ENCODE measurements at regions of chr5 and their contacts with region 1.

Region 1: GRCh38 chr5:151107738-151108508 is 27.1 kb upstream of the TNIP1 start:
- DNase-seq: peak; percentile 94
- H3K4me3 ChIP-seq: no peak overlapping the region
- H3K27ac ChIP-seq: peak overlapping the region; percentile 75 to 94 (median 84)
- H3K4me1 ChIP-seq: peaks cover 0 to 65% (median 54%) of the 10 kb centered on the region in 4 donors
- H3K27me3 ChIP-seq: no peaks in the 10 kb centered on the region
- CTCF ChIP-seq: peak in 3 of 4 experiments; percentile 4 to 29 (median 28)
- EP300 ChIP-seq: peak in 3 of 4 donors; percentile 47 to 88 (median 82)
- POLR2A ChIP-seq: no peak

Region 2: DNA sequence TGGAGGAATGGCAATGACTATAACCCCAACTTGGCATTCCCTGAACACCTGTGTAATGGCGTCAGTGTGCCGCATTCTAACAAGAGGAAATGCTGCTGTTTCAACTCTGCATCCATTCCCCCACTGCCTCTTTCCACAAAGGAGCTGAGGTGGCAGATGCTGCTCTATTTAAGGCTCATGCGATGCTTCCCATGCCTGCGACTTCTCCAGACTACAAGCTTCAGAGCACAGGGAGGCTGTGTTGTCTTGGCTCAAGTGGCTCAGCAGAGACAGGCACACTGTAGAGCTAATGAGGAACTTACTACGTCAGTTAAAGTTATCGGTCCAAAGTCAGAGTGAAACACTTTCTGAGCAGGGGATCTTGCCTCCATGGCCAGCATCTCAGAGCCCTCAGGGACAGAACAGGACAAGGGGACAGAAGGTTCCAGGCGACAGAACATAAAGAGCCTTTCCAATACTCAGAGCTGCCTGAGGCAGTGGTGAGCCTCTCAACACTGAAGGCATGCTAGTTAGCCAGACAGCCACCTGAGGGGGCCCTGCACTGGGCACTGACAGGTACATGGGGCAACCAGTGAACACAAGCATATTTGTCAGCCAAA is 48.9 kb before region 1 on chr5:
- intact Hi-C with region 1: loop called (anchors 2 kb)
- DNase-seq: no peak
- H3K4me3 ChIP-seq: no peak overlapping the region
- H3K27ac ChIP-seq: peak overlapping the region in 3 of 4 donors; percentile 49 to 76 (median 75)
- H3K4me1 ChIP-seq: peaks cover 0 to 48% (median 42%) of the 10 kb centered on the region in 4 donors
- H3K27me3 ChIP-seq: no peaks in the 10 kb centered on the region
- CTCF ChIP-seq: no peak
- EP300 ChIP-seq: no peak
- POLR2A ChIP-seq: no peak

Region 3: GRCh38 chr5:151080623-151081430 is 27.1 kb before region 1 on chr5 and contains the start of gene TNIP1:
- intact Hi-C with region 1: loop called (anchors 2 kb)
- DNase-seq: peak; percentile 97
- H3K4me3 ChIP-seq: peak within 1 kb of the TSS; percentile 66 to 85 (median 74)
- H3K27ac ChIP-seq: peak within 1 kb of the TSS; percentile 92 to 99 (median 98)
- H3K4me1 ChIP-seq: peaks cover 0 to 52% (median 37%) of the 10 kb centered on the region in 4 donors
- H3K27me3 ChIP-seq: no peaks in the 10 kb centered on the region
- CTCF ChIP-seq: no peak
- EP300 ChIP-seq: no peak
- POLR2A ChIP-seq: peak in 1 of 2 donors; percentile 57
- total RNA-seq, gene TNIP1: 55.1 to 73.1 (median 62.8) TPM

Region 4: GRCh38 chr5:151520294-151520693 is 412.4 kb after region 1 on chr5:
- intact Hi-C with region 1: no loop called
- DNase-seq: no peak
- H3K4me3 ChIP-seq: no peak overlapping the region
- H3K27ac ChIP-seq: no peak overlapping the region
- H3K4me1 ChIP-seq: no peaks in the 10 kb centered on the region
- H3K27me3 ChIP-seq: no peaks in the 10 kb centered on the region
- CTCF ChIP-seq: no peak
- EP300 ChIP-seq: no peak
- POLR2A ChIP-seq: no peak